Activated CD8-positive, alpha-beta T cell treated with anti-CD3 and anti-CD28 coated beads, Interleukin-2, amount 10 ng/mL, durations not matched to agents 7 days and 5 days (primary cell): ENCODE measurements at regions of chr5 and their contacts with region 1.

Region 1: GRCh38 chr5:68215208-68215897 is at the start of gene PIK3R1:
- DNase-seq: peak; percentile 93
- ATAC-seq: peak; percentile 83
- H3K4me3 Mint-ChIP-seq: peak within 1 kb of the TSS; percentile 89
- H3K27ac Mint-ChIP-seq: peak within 1 kb of the TSS; percentile 96
- H3K4me1 Mint-ChIP-seq: peaks cover 35% of the 10 kb centered on the region
- H3K27me3 Mint-ChIP-seq: no peaks in the 10 kb centered on the region
- total RNA-seq, gene PIK3R1: 61.1 to 65.0 TPM

Region 2: DNA sequence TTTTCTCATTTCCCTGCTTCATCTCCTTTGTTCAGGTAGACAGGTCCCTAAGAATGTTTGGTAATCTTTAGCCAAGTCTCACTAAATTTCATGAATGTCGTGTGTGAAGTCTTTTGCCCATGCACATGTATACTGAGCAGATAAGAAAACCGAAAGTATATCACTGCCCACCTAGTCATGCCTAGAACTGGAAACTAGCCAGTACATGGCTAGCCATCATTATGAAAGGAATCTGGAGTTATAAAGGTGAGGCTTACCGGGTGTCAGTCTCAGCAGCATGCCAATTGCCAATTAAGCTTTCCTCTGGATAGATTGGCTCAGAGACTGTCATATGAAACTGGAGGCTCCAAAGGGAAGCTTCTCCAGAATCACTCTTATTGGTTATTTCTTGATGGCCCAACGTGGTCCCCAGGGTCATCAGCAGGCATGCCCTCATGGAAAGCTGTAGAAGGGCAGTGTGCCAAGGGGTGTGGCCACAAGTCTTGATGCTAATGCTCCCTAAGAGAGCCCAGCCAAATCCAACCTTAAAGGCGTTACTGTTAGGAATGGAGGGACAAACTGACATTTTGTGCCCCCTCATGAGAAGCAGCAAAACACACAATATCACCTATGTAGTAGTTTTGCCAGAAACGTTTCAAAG is 307.1 kb before region 1 on chr5:
- CTCF ChIA-PET with region 1: no interaction called
- POLR2A ChIA-PET with region 1: no interaction called
- DNase-seq: no peak
- ATAC-seq: no peak
- H3K4me3 Mint-ChIP-seq: no peak overlapping the region
- H3K27ac Mint-ChIP-seq: no peak overlapping the region
- H3K4me1 Mint-ChIP-seq: no peaks in the 10 kb centered on the region
- H3K27me3 Mint-ChIP-seq: peaks cover 3% of the 10 kb centered on the region

Region 3: GRCh38 chr5:68229416-68229815 is 14.1 kb after region 1 on chr5:
- CTCF ChIA-PET with region 1: interaction called, 12 read pairs
- POLR2A ChIA-PET with region 1: interaction called, 8 read pairs
- DNase-seq: no peak
- ATAC-seq: no peak
- H3K4me3 Mint-ChIP-seq: no peak overlapping the region
- H3K27ac Mint-ChIP-seq: no peak overlapping the region
- H3K4me1 Mint-ChIP-seq: peaks cover 58% of the 10 kb centered on the region
- H3K27me3 Mint-ChIP-seq: no peaks in the 10 kb centered on the region

Region 4: DNA sequence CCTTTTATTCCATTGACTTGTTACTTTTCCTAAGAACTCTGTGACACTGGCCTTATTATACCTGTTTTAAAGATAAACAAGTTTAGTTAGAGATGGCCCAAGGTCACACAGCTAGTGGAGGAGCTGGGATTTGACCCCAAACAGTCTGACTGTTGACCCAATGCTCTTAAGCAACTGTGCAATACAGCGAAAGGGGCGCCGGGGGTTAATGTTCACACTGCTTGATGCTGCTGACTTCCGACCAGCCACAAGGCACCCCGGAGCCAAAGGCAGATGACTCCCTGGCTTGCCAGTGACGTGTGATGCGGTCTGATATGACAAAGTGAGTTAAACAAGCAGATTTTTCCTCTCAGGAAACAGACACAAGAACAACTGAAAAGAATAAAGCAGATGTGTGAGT is 24.1 kb after region 1 on chr5:
- CTCF ChIA-PET with region 1: interaction called, 38 read pairs
- POLR2A ChIA-PET with region 1: interaction called, 68 read pairs
- DNase-seq: peak; percentile 89
- ATAC-seq: peak; percentile 97
- H3K4me3 Mint-ChIP-seq: peak overlapping the region; percentile 21
- H3K27ac Mint-ChIP-seq: peak overlapping the region; percentile 72
- H3K4me1 Mint-ChIP-seq: peaks cover 65% of the 10 kb centered on the region
- H3K27me3 Mint-ChIP-seq: no peaks in the 10 kb centered on the region

Region 5: GRCh38 chr5:68252673-68253623 is 37.6 kb after region 1 on chr5:
- CTCF ChIA-PET with region 1: interaction called, 47 read pairs
- POLR2A ChIA-PET with region 1: interaction called, 13 read pairs
- DNase-seq: peak; percentile 54
- ATAC-seq: peak; percentile 40
- H3K4me3 Mint-ChIP-seq: no peak overlapping the region
- H3K27ac Mint-ChIP-seq: no peak overlapping the region
- H3K4me1 Mint-ChIP-seq: peaks cover 76% of the 10 kb centered on the region
- H3K27me3 Mint-ChIP-seq: no peaks in the 10 kb centered on the region

Region 6: DNA sequence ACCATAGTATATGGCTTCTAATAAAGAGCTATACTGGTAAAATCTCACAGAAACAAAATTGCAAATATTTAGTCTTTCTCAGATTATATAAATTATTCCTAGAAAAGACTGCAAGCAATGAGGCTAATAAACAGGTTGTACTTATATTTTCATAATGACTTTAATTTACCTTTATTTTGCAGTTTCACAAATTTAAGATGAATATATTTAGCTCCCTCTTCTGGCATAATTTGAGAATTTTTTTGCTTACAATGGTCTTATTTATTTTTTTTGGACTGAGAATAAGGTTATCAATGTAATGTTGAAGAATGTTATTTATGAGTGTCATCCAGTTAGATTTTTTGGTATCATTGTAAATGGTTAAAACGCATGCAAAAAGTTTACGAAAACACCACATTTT is 56.9 kb after region 1 on chr5:
- CTCF ChIA-PET with region 1: interaction called, 32 read pairs
- POLR2A ChIA-PET with region 1: interaction called, 8 read pairs
- DNase-seq: no peak
- ATAC-seq: no peak
- H3K4me3 Mint-ChIP-seq: no peak overlapping the region
- H3K27ac Mint-ChIP-seq: no peak overlapping the region
- H3K4me1 Mint-ChIP-seq: peaks cover 66% of the 10 kb centered on the region
- H3K27me3 Mint-ChIP-seq: no peaks in the 10 kb centered on the region

Region 7: DNA sequence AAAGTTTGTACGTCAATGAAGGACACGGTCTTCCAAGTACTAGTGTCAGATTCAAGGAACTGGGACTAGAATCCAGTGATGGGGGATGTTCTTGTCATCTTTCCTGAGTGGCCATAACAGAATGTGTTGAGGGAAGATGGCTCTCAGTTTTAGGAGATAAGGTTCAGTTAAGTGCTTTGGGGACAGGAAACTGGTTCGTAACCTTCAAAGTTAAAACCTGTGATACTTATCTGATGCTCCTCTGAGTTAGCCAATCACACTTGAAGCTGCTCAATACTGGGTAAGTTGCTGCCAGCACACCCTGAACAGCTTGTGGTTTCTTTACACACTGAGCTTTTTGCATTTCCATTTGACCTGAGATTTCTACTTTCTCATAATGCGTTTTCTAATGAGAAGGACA is 64.6 kb after region 1 on chr5:
- CTCF ChIA-PET with region 1: interaction called, 8 read pairs
- POLR2A ChIA-PET with region 1: interaction called, 10 read pairs
- DNase-seq: peak; percentile 76
- ATAC-seq: peak; percentile 98
- H3K4me3 Mint-ChIP-seq: peak overlapping the region; percentile 78
- H3K27ac Mint-ChIP-seq: peak overlapping the region; percentile 96
- H3K4me1 Mint-ChIP-seq: peaks cover 78% of the 10 kb centered on the region
- H3K27me3 Mint-ChIP-seq: no peaks in the 10 kb centered on the region